ENCODE measurements at regions of chr3 and their contacts with region 1.

Region 1: DNA sequence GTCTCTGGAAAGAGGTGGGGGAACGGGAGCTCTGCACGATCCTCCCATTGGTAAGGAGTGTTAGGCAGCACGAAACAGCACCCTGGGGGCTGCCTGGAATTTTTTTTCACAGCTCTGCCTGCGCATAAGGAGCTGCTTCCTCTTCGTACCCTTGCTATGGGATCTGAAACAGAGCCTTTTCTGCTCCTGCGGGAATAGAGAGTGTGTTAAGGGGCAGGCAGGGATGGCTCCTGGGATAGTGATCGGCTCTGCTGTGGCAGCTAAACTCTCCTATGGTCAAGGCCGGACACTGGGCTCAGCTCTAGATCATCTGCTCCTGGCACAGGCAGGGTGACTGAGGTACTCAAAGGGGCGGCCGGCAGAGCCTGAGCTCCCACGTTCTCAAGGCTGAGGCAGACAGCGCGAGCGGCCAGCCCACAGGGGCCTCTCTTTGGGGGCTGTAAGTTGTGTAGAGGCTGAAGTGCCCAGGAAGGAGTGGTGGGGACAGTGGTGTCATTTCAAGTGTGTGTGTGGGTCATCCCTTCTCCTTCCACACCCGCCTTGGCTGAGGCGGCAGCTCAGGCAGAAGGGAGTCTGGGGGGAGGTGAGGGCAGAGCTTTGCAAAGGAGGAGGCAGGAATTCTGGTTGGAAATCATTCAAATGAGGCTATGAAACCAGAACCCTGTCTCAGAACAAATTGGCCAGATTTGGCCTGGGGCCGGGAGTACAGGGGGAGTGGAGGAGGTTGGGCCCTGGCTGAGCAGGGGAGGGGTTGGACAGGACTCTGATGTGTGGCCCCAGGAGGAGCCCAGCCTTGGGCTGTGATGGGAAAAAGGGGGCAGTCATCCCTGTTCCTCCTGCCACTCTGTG is 31.0 kb downstream of the EPHB3 start:
- DNase-seq: no peak
- ATAC-seq: no peak
- H3K4me3 ChIP-seq: no peak overlapping the region
- H3K4me3 Mint-ChIP-seq: no peak overlapping the region
- H3K27ac ChIP-seq: no peak overlapping the region
- H3K27ac Mint-ChIP-seq: no peak overlapping the region
- H3K4me1 ChIP-seq: no peaks in the 10 kb centered on the region
- H3K4me1 Mint-ChIP-seq: no peaks in the 10 kb centered on the region
- H3K27me3 ChIP-seq: no peaks in the 10 kb centered on the region
- H3K27me3 Mint-ChIP-seq: no peaks in the 10 kb centered on the region
- CTCF ChIP-seq: no peak

Region 2: GRCh38 chr3:184656829-184657681 is 64.5 kb after region 1 on chr3:
- CTCF ChIA-PET with region 1: no interaction called
- POLR2A ChIA-PET with region 1: no interaction called
- intact Hi-C with region 1: loop called in 1 of 2 experiments (anchors 5 kb)
- DNase-seq: no peak
- ATAC-seq: no peak
- H3K4me3 ChIP-seq: no peak overlapping the region
- H3K4me3 Mint-ChIP-seq: no peak overlapping the region
- H3K27ac ChIP-seq: no peak overlapping the region
- H3K27ac Mint-ChIP-seq: no peak overlapping the region
- H3K4me1 ChIP-seq: no peaks in the 10 kb centered on the region
- H3K4me1 Mint-ChIP-seq: peaks cover 4% of the 10 kb centered on the region
- H3K27me3 ChIP-seq: no peaks in the 10 kb centered on the region
- H3K27me3 Mint-ChIP-seq: no peaks in the 10 kb centered on the region
- CTCF ChIP-seq: no peak

Measured in CD4-positive, alpha-beta T cell (primary cell).